ENCODE measurements at regions of chr4 and their contacts with region 1.

Region 1: GRCh38 chr4:183261953-183262775 is 57.9 kb downstream of the CLDN22 start:
- DNase-seq: peak; percentile 69 to 79
- ATAC-seq: peak; percentile 85 to 98 (median 93)
- H3K4me3 ChIP-seq: no peak overlapping the region
- H3K27ac ChIP-seq: peak overlapping the region in 5 of 10 donors; percentile 11 to 57 (median 43)
- H3K4me1 ChIP-seq: peaks cover 0 to 9% (median 8%) of the 10 kb centered on the region in 9 donors
- H3K27me3 ChIP-seq: no peaks in the 10 kb centered on the region
- CTCF ChIP-seq: peak; percentile 63 to 85 (median 71)

Region 2: DNA sequence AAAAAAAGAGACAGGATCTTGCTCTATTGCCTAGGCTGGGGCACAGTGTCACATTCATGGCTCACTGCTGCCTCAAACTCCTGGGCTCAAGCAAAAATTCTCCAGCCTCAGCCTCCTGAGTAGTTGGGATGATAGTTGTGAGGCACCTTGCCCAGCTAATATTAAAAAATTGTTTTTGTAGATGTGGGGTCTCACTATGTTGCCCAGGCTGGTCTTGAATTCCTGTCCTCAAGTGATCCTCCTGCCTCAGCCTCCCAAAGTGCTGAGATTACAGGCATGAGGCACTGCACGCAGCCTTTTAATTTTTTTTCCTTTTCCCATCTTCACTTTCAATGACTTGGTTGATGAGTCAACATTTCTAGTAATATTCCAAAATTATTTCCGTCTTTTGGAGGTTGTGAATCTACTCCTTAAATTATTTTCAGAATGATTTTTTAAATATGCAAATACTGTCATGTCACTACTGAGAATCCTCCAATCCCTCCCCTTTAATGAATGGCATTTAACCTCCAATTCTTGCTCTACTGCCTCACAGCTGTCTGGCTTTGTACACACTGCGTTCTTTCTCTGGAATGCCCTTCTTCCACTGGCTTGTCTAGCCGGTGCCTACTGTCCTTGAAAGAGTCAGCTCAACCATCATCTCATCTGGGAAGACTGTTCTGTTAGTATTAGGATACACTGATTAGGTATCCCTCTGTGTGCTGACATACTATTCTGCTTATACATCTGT is 317.5 kb before region 1 on chr4:
- intact Hi-C with region 1: loop called in 7 of 10 experiments (anchors 2 to 5 kb)
- DNase-seq: no peak
- ATAC-seq: no peak
- H3K4me3 ChIP-seq: no peak overlapping the region
- H3K27ac ChIP-seq: no peak overlapping the region
- H3K4me1 ChIP-seq: no peaks in the 10 kb centered on the region
- H3K27me3 ChIP-seq: peaks cover 0 to 5% (median 3%) of the 10 kb centered on the region in 7 donors
- CTCF ChIP-seq: no peak

Region 3: DNA sequence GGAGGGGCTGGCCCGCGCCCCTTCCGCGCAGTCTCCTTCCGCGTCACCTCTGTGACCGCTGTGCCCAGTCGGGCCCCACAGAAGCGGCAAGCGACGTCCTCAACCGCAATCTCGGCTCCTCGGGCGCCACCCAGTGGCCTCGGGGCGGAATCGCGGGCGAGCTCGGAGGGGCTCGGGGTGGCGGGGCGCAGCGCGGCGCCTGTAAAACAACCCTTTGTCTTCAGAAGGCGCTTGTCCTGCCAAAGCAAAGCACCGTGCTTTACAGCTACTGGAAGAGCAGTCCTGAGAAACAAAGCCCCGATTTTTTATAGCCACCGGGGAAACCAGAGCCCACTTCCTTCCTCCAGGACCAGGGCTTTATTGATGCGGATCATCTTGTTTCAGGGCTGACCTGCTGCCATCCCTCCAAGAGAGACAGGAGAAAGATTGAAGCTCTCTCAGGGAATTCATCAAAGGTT is 145.0 kb after region 1 on chr4:
- intact Hi-C with region 1: loop called in 2 of 10 experiments (anchors 10 kb)
- DNase-seq: peak; percentile 79 to 90
- ATAC-seq: peak; percentile 89 to 95 (median 92)
- H3K4me3 ChIP-seq: peak overlapping the region in 9 of 10 donors; percentile 28 to 55 (median 45)
- H3K27ac ChIP-seq: peak overlapping the region in 7 of 10 donors; percentile 7 to 76 (median 32)
- H3K4me1 ChIP-seq: peaks cover 0 to 11% (median 0%) of the 10 kb centered on the region in 9 donors
- H3K27me3 ChIP-seq: no peaks in the 10 kb centered on the region
- CTCF ChIP-seq: peak; percentile 92 to 99 (median 96)

Region 4: DNA sequence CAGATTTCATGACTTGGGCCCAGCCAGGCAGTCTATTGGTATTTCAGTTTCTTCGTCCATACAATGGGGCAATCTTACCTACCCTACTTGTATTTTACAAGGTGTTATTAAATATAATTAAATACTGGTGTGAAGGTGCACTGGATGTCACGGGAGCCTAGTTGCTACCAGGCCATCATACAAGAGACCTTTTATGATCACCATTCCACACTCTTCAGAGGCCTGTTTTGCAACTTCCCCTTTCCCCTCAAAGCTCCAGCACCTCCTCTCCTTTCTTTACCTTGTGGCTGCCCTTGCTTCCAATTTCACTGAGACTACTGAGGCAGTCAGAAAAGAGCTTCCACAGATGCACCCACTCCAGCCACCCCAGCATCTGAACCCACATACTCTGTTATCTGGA is 1662.4 kb after region 1 on chr4:
- intact Hi-C with region 1: no loop called
- DNase-seq: no peak
- ATAC-seq: no peak
- H3K4me3 ChIP-seq: no peak overlapping the region
- H3K27ac ChIP-seq: no peak overlapping the region
- H3K4me1 ChIP-seq: no peaks in the 10 kb centered on the region
- H3K27me3 ChIP-seq: no peaks in the 10 kb centered on the region
- CTCF ChIP-seq: no peak